ENCODE measurements at regions of chr9 and their contacts with region 1.

Region 1: DNA sequence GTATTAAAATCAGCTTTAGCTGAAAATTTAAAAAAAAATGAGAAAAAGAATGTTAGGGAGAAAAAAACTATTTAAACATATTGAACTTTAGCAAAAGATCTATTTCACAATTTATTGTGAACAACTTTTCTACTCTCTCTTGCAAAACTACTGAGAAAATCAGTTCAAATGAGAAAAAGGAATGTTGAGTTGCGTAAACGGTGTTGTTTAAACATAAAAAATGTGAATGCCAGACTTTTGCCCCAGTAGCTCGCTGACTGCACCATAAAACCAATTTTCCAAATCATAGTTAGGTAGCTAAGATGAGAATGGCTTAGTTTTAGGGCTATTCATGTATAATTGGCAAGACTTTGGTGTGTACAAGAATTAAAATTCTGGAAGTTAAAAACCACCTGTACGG is 13.4 kb upstream of the RAD23B start:
- DNase-seq: peak; percentile 87
- ATAC-seq: peak; percentile 69
- H3K4me3 ChIP-seq: peak overlapping the region; percentile 3 to 46 (median 36); a peak in 3 of 6 replicates
- H3K27ac ChIP-seq: peak overlapping the region; percentile 64
- H3K4me1 ChIP-seq: peaks cover 41% of the 10 kb centered on the region
- H3K27me3 ChIP-seq: no peaks in the 10 kb centered on the region
- CTCF ChIP-seq: no peak
- EP300 ChIP-seq: peak; percentile 36 to 83; a peak in 2 of 4 replicates
- POLR2A ChIP-seq: no peak
- RAD21 ChIP-seq: no peak

Region 2: GRCh38 chr9:107020040-107020530 is 249.6 kb before region 1 on chr9:
- CTCF ChIA-PET with region 1: no interaction called
- POLR2A ChIA-PET with region 1: no interaction called
- in situ Hi-C with region 1: no loop called
- intact Hi-C with region 1: no loop called
- DNase-seq: no peak
- ATAC-seq: no peak
- H3K4me3 ChIP-seq: no peak overlapping the region
- H3K27ac ChIP-seq: no peak overlapping the region
- H3K4me1 ChIP-seq: no peaks in the 10 kb centered on the region
- H3K27me3 ChIP-seq: no peaks in the 10 kb centered on the region
- CTCF ChIP-seq: no peak
- EP300 ChIP-seq: no peak
- POLR2A ChIP-seq: no peak
- RAD21 ChIP-seq: no peak

Region 3: DNA sequence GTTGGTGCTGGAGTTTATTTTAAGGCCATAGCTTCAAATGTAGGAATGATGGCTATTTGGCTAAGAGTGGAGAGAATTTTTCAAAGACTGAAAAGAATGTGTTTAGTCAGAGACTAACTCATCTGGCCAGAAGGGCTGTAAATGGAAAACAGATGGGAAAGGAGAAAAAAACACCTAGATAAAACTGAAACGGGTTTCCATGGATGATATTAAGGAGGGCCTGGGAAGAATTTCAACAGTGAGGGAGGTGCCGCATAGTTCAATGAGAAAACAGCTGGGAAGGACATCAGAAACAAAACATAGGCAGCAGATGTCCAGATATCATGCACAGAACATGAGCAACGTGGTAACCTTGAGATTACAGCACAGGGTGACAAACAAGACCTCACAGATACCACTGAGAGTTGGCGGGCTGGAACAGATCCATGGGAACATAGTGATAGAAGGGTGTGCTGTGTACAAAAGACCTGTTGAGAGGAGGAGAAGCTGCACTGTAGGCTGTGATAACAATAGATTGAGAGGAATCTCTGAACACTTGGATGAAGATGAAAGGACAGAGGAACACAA is 17.8 kb before region 1 on chr9:
- CTCF ChIA-PET with region 1: no interaction called
- POLR2A ChIA-PET with region 1: interaction called, 10 read pairs
- in situ Hi-C with region 1: no loop called
- intact Hi-C with region 1: no loop called
- DNase-seq: peak; percentile 97
- ATAC-seq: peak; percentile 87
- H3K4me3 ChIP-seq: peak overlapping the region in 1 of 3 experiments; percentile 18; a peak in 1 of 6 replicates
- H3K27ac ChIP-seq: peak overlapping the region; percentile 50
- H3K4me1 ChIP-seq: peaks cover 76% of the 10 kb centered on the region
- H3K27me3 ChIP-seq: no peaks in the 10 kb centered on the region; a peak in 1 of 5 replicates
- CTCF ChIP-seq: no peak
- EP300 ChIP-seq: peak in 1 of 2 experiments; percentile 71; a peak in 1 of 4 replicates
- POLR2A ChIP-seq: no peak
- RAD21 ChIP-seq: no peak

Measured in HepG2 (cell line).